ENCODE measurements at regions of chr11 and their contacts with region 1.

Region 1: GRCh38 chr11:58579192-58580129 is 598 bp downstream of the ZFP91 start:
- DNase-seq: peak; percentile 95
- H3K4me3 Mint-ChIP-seq: peak overlapping the region; percentile 87
- H3K27ac Mint-ChIP-seq: peak overlapping the region; percentile 100
- H3K4me1 Mint-ChIP-seq: peaks cover 46% of the 10 kb centered on the region
- H3K27me3 Mint-ChIP-seq: no peaks in the 10 kb centered on the region

Region 2: DNA sequence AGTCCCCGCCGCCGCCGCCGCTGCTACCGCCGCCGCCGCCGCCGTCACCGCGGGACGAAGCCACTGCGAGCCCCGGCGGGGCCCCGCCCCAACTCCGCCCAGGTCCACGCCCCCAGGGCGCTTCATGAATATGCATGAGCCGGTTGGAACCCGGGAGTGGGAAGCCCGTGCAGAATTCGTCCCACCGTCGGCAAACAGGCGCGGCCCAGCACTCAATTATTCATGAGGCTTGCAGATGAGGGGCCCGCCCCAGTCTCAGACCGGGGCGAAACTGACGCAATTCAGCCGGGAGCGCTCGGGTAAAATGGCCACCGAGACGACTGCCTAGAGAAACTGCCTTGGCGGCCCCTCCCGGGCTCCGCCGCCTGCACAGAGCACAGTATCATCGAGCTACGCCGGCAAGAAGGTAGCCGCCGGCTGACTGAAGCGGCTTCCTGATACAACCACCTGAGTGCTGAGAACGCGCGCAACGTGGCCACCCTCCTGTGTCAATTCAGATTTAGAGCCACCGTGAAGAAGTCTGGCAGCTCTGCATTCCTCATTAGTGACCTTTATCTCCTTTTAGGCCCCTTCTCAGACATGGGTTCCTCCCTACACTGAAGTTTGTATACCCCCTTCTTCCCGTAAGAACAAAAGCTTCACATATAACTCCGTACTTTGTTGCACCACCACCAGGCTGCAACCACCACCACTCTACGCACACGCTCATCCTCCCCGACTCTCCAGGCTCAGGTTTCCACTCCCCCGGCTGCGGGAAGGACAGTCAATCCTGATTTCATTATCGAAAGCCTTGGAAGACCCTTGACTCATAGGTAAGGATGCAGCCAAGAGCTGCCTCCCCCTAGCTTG is 1254.4 kb before region 1 on chr11 and contains the start of gene TNKS1BP1:
- CTCF ChIA-PET with region 1: no interaction called
- POLR2A ChIA-PET with region 1: no interaction called
- intact Hi-C with region 1: loop called (anchors 5 kb)
- DNase-seq: peak; percentile 95
- H3K4me3 Mint-ChIP-seq: peak within 1 kb of the TSS; percentile 79
- H3K27ac Mint-ChIP-seq: peak within 1 kb of the TSS; percentile 95
- H3K4me1 Mint-ChIP-seq: peaks cover 42% of the 10 kb centered on the region
- H3K27me3 Mint-ChIP-seq: no peaks in the 10 kb centered on the region
- total RNA-seq, gene TNKS1BP1: 14.0 to 15.1 TPM

Region 3: GRCh38 chr11:57657194-57658022 is 922.1 kb before region 1 on chr11 and contains the start of gene CLP1:
- CTCF ChIA-PET with region 1: no interaction called
- POLR2A ChIA-PET with region 1: no interaction called
- intact Hi-C with region 1: loop called (anchors 1 kb)
- DNase-seq: peak; percentile 100
- H3K4me3 Mint-ChIP-seq: peak within 1 kb of the TSS; percentile 100
- H3K27ac Mint-ChIP-seq: peak within 1 kb of the TSS; percentile 94
- H3K4me1 Mint-ChIP-seq: peaks cover 33% of the 10 kb centered on the region
- H3K27me3 Mint-ChIP-seq: no peaks in the 10 kb centered on the region
- total RNA-seq, gene CLP1: 13.9 to 15.2 TPM

Region 4: GRCh38 chr11:58524232-58525036 is 55.0 kb before region 1 on chr11:
- CTCF ChIA-PET with region 1: interaction called, 21 read pairs
- POLR2A ChIA-PET with region 1: interaction called, 4 read pairs
- intact Hi-C with region 1: loop called (anchors 1 kb)
- DNase-seq: peak; percentile 64
- H3K4me3 Mint-ChIP-seq: peak overlapping the region; percentile 63
- H3K27ac Mint-ChIP-seq: peak overlapping the region; percentile 82
- H3K4me1 Mint-ChIP-seq: peaks cover 47% of the 10 kb centered on the region
- H3K27me3 Mint-ChIP-seq: no peaks in the 10 kb centered on the region

Region 5: GRCh38 chr11:58621586-58622262 is 42.3 kb after region 1 on chr11:
- CTCF ChIA-PET with region 1: interaction called, 8 read pairs
- POLR2A ChIA-PET with region 1: no interaction called
- intact Hi-C with region 1: loop called (anchors 2 kb)
- DNase-seq: no peak
- H3K4me3 Mint-ChIP-seq: no peak overlapping the region
- H3K27ac Mint-ChIP-seq: no peak overlapping the region
- H3K4me1 Mint-ChIP-seq: peaks cover 16% of the 10 kb centered on the region
- H3K27me3 Mint-ChIP-seq: no peaks in the 10 kb centered on the region

Region 6: DNA sequence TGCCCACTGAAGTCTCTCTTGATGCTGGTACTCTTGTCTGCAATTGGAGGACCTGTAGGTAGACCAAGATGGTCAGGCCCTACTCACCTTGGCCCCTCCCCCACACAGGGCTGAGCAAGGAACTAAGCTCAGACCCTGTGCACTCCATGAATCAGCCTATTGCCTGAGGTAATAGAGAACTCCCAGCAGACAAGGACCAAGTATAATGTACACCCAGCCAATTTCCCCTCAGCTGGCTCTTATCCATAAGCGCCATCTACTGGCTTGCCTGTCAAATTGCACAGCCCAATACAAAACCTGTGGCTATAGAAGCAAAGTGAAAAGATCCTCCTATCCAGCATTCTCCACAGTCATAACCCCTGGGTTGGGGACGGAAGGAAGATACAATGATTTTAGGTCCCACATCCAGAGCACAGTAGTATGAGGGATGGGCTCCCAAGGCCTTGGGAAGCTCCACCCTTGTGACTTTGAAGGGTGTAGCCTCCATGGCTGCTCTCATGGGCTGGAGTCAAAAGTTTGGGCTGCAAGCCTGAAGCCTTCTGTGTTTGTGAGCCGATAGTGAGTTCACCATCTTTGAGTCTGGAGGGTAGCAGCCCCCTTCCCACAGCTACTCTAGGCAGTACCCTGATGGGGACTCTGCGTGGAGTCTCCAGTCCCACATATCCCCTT is 209.0 kb after region 1 on chr11:
- CTCF ChIA-PET with region 1: interaction called, 4 read pairs
- POLR2A ChIA-PET with region 1: interaction called, 3 read pairs
- intact Hi-C with region 1: loop called (anchors 2 kb)
- DNase-seq: peak; percentile 56
- H3K4me3 Mint-ChIP-seq: no peak overlapping the region
- H3K27ac Mint-ChIP-seq: no peak overlapping the region
- H3K4me1 Mint-ChIP-seq: no peaks in the 10 kb centered on the region
- H3K27me3 Mint-ChIP-seq: peaks cover 3% of the 10 kb centered on the region

Region 7: DNA sequence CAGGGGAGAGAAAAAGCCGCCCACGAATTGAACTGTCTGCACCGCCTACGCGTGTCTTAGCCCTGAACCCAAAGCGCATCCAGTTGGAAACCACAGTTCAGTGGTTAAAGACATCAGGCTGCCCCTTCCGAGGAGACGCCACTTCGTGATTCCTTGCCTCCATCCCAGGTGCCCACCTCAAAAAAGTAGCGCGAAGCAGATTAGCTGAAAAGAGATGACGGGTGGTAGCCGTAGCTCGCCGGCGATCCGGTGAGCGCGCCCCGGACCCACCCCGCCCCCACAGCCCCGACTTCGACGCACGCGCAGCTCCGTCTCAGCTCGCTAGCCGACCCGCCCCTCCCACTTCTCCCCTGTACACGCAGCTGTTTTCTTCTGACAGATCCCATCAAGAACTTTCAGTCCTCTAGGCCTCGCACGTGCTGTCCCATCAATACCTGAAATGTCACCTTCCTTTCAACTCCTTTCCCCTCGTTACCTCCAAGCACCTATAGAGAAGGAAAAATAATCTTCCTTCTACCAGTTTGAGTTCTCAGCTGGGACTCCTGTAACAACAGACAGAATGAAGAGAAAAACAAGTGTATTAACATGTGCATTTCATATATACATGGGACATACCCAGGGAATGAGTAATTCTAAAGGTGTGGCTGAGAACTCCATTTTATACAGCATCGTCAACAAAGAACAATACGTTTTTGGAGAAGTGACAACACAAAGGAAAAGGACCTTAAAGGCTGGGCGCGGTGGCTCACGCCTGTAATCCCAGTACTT is 981.4 kb after region 1 on chr11:
- CTCF ChIA-PET with region 1: no interaction called
- POLR2A ChIA-PET with region 1: no interaction called
- intact Hi-C with region 1: loop called (anchors 2 kb)
- DNase-seq: peak; percentile 90
- H3K4me3 Mint-ChIP-seq: peak overlapping the region; percentile 93
- H3K27ac Mint-ChIP-seq: peak overlapping the region; percentile 96
- H3K4me1 Mint-ChIP-seq: peaks cover 42% of the 10 kb centered on the region
- H3K27me3 Mint-ChIP-seq: peaks cover 4% of the 10 kb centered on the region

Measured in activated CD4-positive, alpha-beta memory T cell treated with anti-CD3 and anti-CD28 coated beads for 36 hours (primary cell).